ENCODE measurements at regions of chr2 and their contacts with region 1.

Region 1: DNA sequence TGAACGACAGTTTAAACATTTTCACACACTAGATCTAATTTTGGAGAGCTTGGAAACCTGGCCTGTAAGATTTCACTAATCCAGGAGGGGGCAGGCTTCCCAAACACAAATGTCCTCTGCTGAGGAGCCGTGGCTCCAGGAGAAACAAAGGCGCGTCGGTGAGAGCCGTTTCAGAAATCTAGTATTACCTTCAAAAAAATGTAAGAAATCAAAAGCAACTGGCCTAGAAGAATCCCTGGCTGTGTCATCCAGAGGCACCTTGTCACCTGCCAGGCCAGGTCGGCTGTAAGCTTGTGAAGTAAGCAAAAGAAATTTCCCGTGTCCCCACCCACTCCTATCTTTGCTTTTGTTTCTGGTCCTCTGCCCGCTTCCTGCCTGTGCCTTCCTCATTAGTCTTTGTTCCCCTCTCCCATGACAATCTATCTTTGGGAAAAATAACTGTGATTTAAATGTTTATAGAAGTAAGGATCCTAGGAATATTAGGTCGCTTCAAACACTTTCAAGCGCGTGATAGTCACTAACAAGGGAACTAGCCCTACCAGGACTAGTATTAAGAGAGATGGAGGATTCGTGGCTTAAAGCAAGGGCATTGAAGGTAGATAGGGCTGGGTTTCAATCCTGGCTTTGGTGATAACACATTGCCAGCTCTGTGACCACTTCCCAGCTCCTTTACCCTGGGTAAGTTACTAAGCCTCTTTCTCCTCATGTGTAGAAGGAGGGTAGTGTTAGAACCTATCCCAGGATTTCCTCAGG is 99.5 kb upstream of the STK39 start:
- DNase-seq: peak; percentile 42
- H3K4me3 ChIP-seq: peak overlapping the region; percentile 67
- H3K27ac ChIP-seq: peak overlapping the region; percentile 52
- H3K4me1 ChIP-seq: peaks cover 6% of the 10 kb centered on the region
- H3K27me3 ChIP-seq: no peaks in the 10 kb centered on the region
- CTCF ChIP-seq: peak; percentile 88

Region 2: DNA sequence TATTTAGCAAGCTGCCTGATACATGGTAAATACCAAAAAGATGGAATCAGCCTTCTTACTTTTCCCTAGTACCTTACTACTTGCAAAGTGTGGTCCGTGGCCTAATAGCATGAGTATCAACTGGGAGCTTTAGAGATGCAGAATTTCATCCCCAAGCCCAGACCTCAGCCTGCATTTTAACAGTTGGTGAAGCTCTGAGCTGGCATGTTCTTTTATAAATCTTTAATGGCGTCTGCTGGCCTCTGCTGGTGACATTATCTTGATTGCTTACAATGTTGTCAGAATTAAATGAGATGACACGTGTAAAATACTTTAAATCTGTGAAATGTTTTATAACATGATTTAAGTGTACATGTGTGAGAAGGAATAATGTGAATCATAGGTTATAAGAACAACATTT is 340.4 kb after region 1 on chr2:
- intact Hi-C with region 1: loop called (anchors 10 kb)
- DNase-seq: no peak
- H3K4me3 ChIP-seq: no peak overlapping the region
- H3K27ac ChIP-seq: no peak overlapping the region
- H3K4me1 ChIP-seq: peaks cover 45% of the 10 kb centered on the region
- H3K27me3 ChIP-seq: no peaks in the 10 kb centered on the region
- CTCF ChIP-seq: peak; percentile 48

Region 3: GRCh38 chr2:168758970-168759820 is 412.3 kb after region 1 on chr2:
- intact Hi-C with region 1: loop called (anchors 5 kb)
- DNase-seq: no peak
- H3K4me3 ChIP-seq: no peak overlapping the region
- H3K27ac ChIP-seq: no peak overlapping the region
- H3K4me1 ChIP-seq: peaks cover 25% of the 10 kb centered on the region
- H3K27me3 ChIP-seq: no peaks in the 10 kb centered on the region
- CTCF ChIP-seq: peak; percentile 71

Region 4: DNA sequence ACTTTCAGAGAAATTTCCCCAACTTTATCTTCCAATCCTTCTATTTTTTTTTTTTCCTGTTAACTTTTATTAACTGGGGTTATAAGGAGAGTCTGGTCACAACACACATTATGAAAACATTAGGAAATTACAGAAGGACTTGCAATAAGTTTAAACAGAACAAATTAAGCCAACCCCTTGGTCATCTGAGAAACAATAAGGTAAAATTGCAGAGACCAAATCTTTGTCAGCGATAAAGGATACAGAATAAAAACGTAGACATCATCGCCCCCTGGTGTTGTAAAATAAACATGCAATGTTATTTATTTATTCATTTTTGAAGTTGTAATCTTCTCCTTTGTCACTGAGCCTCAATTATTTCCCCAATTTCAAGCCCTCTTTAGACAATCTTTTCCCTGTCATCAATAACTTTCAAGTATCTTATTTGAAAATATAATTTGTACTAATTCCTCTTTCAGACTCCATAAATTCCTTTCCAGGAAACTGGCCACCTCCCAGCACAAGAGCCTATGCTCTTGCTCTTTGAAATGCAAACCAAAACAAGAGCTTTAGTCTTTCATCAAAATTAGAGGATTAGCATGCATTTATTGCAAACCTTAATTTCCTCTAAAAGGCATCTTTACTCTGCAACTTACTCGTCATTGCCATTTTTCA is 573.7 kb after region 1 on chr2:
- intact Hi-C with region 1: loop called (anchors 5 kb)
- DNase-seq: no peak
- H3K4me3 ChIP-seq: no peak overlapping the region
- H3K27ac ChIP-seq: no peak overlapping the region
- H3K4me1 ChIP-seq: no peaks in the 10 kb centered on the region
- H3K27me3 ChIP-seq: peaks cover 9% of the 10 kb centered on the region
- CTCF ChIP-seq: peak; percentile 73